ENCODE measurements at regions of chr6 and their contacts with region 1.

Region 1: DNA sequence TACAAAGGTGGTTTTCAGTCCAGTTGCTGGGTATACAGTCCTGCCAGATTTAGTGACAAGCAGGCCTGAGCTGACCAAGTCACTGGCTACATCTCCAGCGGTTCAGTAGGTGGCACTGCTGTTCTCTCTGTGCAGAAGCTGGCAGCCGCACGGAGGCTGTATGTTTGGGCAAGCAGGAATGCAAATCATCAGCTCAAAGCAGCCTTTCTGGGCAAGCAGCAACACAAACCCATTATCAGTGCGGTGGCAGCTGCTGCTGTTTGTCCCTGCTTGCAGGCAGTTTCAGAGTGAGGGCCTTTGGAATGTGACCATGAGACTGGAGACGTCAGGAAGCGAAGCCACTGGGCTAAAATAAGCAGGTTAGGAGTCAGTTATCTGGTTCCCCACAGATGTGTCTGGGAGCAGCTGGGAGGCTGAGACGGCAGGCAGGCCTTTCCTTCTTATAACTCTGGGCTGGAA is 72.5 kb downstream of the TXLNB start:
- DNase-seq: peak; percentile 61 to 71
- H3K4me3 ChIP-seq: no peak overlapping the region
- H3K27ac ChIP-seq: no peak overlapping the region
- H3K4me1 ChIP-seq: no peaks in the 10 kb centered on the region
- H3K27me3 ChIP-seq: no peaks in the 10 kb centered on the region
- CTCF ChIP-seq: peak; percentile 86

Region 2: GRCh38 chr6:139124887-139125672 is 94.2 kb before region 1 on chr6:
- CTCF ChIA-PET with region 1: interaction called, 10 read pairs
- POLR2A ChIA-PET with region 1: no interaction called
- intact Hi-C with region 1: no loop called
- DNase-seq: peak in 1 of 2 experiments; percentile 17
- H3K4me3 ChIP-seq: no peak overlapping the region
- H3K27ac ChIP-seq: no peak overlapping the region
- H3K4me1 ChIP-seq: no peaks in the 10 kb centered on the region
- H3K27me3 ChIP-seq: no peaks in the 10 kb centered on the region
- CTCF ChIP-seq: no peak

Region 3: GRCh38 chr6:139364302-139364981 is 145.1 kb after region 1 on chr6:
- CTCF ChIA-PET with region 1: interaction called, 12 read pairs
- POLR2A ChIA-PET with region 1: no interaction called
- intact Hi-C with region 1: loop called (anchors 1 kb)
- DNase-seq: peak in 1 of 2 experiments; percentile 65
- H3K4me3 ChIP-seq: no peak overlapping the region
- H3K27ac ChIP-seq: no peak overlapping the region
- H3K4me1 ChIP-seq: peaks cover 9% of the 10 kb centered on the region
- H3K27me3 ChIP-seq: no peaks in the 10 kb centered on the region
- CTCF ChIP-seq: peak; percentile 97

Region 4: GRCh38 chr6:139369568-139370282 is 150.4 kb after region 1 on chr6:
- CTCF ChIA-PET with region 1: interaction called, 12 read pairs
- POLR2A ChIA-PET with region 1: no interaction called
- intact Hi-C with region 1: loop called (anchors 1 kb)
- DNase-seq: peak; percentile 9 to 70
- H3K4me3 ChIP-seq: peak overlapping the region; percentile 89; the same call in 1 of the 2 replicates
- H3K27ac ChIP-seq: peak overlapping the region; percentile 28
- H3K4me1 ChIP-seq: peaks cover 36% of the 10 kb centered on the region
- H3K27me3 ChIP-seq: no peaks in the 10 kb centered on the region
- CTCF ChIP-seq: peak; percentile 96

Measured in PC-9 (cell line).